Activated CD4-positive, alpha-beta memory T cell treated with anti-CD3 and anti-CD28 coated beads for 36 hours (primary cell): ENCODE measurements at regions of chr14 and their contacts with region 1.

Region 1: GRCh38 chr14:105480952-105481801 is 5.5 kb upstream of the CRIP1 start:
- DNase-seq: peak; percentile 95
- H3K4me3 Mint-ChIP-seq: peak overlapping the region; percentile 71
- H3K27ac Mint-ChIP-seq: peak overlapping the region; percentile 92
- H3K4me1 Mint-ChIP-seq: peaks cover 61% of the 10 kb centered on the region
- H3K27me3 Mint-ChIP-seq: peaks cover 14% of the 10 kb centered on the region

Region 2: DNA sequence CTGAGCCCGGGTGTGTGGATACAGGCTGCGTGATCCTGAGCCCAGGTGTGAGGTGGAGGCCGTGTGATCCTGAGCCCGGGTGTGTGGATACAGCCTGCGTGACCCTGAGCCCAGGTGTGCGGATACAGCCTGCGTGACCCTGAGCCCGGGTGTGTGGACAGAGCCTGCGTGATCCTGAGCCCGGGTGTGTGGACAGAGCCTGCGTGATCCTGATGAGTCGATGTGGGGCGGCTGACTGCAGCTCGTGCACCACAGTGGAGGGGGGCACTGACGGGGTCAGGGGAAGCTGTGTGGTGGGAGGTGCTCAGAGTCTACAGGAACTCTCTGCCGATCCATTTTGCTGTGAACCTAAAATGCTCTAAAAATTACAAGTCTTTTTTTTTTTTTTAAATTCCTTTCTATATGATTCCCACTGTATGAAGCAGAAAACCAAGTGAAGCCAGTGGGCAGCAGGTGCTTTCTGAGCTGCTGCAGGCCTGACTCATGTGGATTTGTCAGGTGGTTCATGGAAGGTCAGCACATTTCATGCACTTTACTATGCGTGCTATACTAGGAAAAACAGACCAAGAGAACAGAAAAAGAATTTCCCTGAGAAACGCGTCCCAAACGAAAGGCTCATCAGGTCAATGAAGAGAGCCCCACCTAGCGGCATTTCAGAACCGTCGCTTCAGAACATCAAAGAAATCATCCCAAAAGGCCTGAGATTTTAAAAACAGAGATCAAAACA is 199.6 kb before region 1 on chr14:
- CTCF ChIA-PET with region 1: no interaction called
- POLR2A ChIA-PET with region 1: no interaction called
- intact Hi-C with region 1: no loop called
- DNase-seq: peak; percentile 28
- H3K4me3 Mint-ChIP-seq: no peak overlapping the region
- H3K27ac Mint-ChIP-seq: no peak overlapping the region
- H3K4me1 Mint-ChIP-seq: peaks cover 19% of the 10 kb centered on the region
- H3K27me3 Mint-ChIP-seq: no peaks in the 10 kb centered on the region

Region 3: GRCh38 chr14:105456736-105457617 is 24.2 kb before region 1 on chr14:
- CTCF ChIA-PET with region 1: no interaction called
- POLR2A ChIA-PET with region 1: no interaction called
- intact Hi-C with region 1: no loop called
- DNase-seq: no peak
- H3K4me3 Mint-ChIP-seq: no peak overlapping the region
- H3K27ac Mint-ChIP-seq: no peak overlapping the region
- H3K4me1 Mint-ChIP-seq: no peaks in the 10 kb centered on the region
- H3K27me3 Mint-ChIP-seq: no peaks in the 10 kb centered on the region

Region 4: DNA sequence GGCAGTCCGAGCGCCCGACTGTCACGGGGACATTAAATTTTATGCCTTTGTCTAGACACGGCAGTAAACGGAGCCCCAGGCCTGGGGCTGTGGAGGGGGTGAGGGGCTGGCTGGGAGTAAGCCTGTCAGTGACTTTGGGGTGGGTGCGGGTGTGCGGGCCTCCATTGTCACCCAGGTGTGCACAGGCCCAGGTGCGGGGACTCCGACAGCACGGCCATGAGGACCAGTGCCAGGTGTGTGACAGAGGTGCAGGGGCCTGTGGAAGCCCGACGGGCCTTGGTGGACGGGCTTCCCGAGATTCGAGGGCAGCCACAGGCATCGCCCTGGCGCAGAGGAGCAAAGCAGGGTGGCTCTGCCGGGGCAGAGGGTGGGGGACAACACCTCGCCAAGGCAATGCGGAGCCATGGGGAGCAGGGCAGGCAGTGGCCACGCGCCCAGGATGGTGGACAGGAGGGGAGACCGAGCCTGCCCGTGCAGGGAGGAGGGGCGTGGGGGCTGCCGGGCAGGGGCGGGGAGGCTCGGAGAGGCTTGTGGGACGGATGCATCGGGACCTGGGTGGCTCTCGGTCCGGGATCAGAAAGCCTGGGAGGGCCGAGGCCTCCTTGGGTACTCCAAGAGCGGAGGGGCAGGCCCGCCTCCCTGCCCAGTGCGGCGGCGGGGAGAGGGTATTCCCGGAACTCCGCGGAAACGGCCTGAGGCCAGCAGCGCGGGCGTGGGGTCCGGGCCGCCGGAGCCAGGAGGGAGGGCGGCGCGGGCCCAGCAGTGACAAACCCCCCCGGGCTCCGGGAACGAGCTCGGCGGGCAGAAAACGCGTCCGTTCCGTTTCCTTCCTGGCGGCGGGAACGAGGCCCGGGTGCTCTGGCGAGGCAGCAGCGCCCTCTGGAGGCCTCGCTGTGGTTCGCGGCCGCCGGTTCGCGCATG is 46.7 kb after region 1 on chr14:
- CTCF ChIA-PET with region 1: interaction called, 25 read pairs
- POLR2A ChIA-PET with region 1: interaction called, 6 read pairs
- intact Hi-C with region 1: loop called (anchors 10 kb)
- DNase-seq: peak; percentile 86
- H3K4me3 Mint-ChIP-seq: peak overlapping the region; percentile 75
- H3K27ac Mint-ChIP-seq: peak overlapping the region; percentile 42
- H3K4me1 Mint-ChIP-seq: peaks cover 20% of the 10 kb centered on the region
- H3K27me3 Mint-ChIP-seq: peaks cover 2% of the 10 kb centered on the region

Region 5: GRCh38 chr14:105537369-105538164 is 56.4 kb after region 1 on chr14:
- CTCF ChIA-PET with region 1: interaction called, 11 read pairs
- POLR2A ChIA-PET with region 1: no interaction called
- intact Hi-C with region 1: no loop called
- DNase-seq: peak; percentile 78
- H3K4me3 Mint-ChIP-seq: no peak overlapping the region
- H3K27ac Mint-ChIP-seq: no peak overlapping the region
- H3K4me1 Mint-ChIP-seq: peaks cover 4% of the 10 kb centered on the region
- H3K27me3 Mint-ChIP-seq: peaks cover 6% of the 10 kb centered on the region